Spleen (tissue), 13 donors: ENCODE measurements at regions of chr3 and their contacts with region 1.

Region 1: DNA sequence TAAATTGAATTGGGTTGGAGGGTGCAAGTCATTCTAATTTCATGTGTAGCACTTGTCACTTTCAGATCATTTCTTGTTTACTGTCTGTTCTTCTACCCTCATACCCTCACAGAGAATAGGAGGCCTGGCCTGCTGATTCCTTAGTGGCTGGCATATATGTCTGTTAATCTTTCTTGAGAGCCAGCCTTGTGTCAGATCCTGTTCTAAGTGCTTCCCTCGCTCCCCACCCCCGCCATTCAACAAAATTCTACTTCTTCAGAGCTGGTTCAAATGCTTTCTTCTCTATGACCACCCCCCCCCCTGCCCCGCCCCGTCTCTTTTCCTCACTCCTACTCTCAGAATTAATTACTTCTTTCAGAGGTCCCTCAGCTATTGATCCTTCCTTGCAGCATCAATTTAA is 1.5 kb upstream of the U2SURP start:
- DNase-seq: no peak
- H3K4me3 ChIP-seq: peak overlapping the region in 2 of 8 donors; percentile 99
- H3K27ac ChIP-seq: peak overlapping the region in 2 of 8 donors; percentile 94 to 95
- H3K4me1 ChIP-seq: peaks cover 18 to 43% (median 36%) of the 10 kb centered on the region in 6 donors
- H3K27me3 ChIP-seq: no peaks in the 10 kb centered on the region
- CTCF ChIP-seq: no peak
- POLR2A ChIP-seq: no peak

Region 2: DNA sequence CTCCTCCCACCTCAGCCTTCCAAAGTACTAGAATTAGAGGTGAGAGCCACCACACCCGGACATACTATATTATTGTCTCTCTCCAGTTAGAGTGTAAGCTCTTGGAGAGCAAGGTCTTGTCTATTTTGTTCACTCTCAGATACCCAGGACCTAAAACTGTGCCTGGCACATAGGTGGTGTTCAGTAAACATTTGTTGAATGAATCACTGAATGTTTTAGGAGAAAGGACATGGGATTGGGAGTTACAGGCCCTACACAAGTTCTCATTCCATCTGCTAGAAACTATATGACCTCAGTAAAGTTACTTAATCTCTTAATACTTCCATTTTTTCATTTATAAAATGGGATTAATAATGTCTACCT is 419.8 kb before region 1 on chr3:
- intact Hi-C with region 1: loop called (anchors 5 kb)
- DNase-seq: no peak
- H3K4me3 ChIP-seq: no peak overlapping the region
- H3K27ac ChIP-seq: peak overlapping the region in 1 of 8 donors; percentile 94
- H3K4me1 ChIP-seq: peaks cover 24 to 43% (median 36%) of the 10 kb centered on the region in 6 donors
- H3K27me3 ChIP-seq: no peaks in the 10 kb centered on the region
- CTCF ChIP-seq: no peak
- POLR2A ChIP-seq: no peak